ENCODE measurements at regions of chr1 and their contacts with region 1.

Region 1: GRCh38 chr1:47189844-47190508 is at the start of gene PDZK1IP1:
- DNase-seq: peak; percentile 86 to 92 (median 90)
- ATAC-seq: peak; percentile 81 to 89 (median 85)
- H3K4me3 ChIP-seq: peak within 1 kb of the TSS; percentile 3 to 43 (median 20)
- H3K27ac ChIP-seq: peak within 1 kb of the TSS; percentile 70 to 90 (median 79)
- H3K4me1 ChIP-seq: peaks cover 12 to 19% (median 17%) of the 10 kb centered on the region in 3 donors
- H3K27me3 ChIP-seq: no peaks in the 10 kb centered on the region
- CTCF ChIP-seq: no peak
- total RNA-seq, gene PDZK1IP1: 26.6 to 55.9 (median 46.4) TPM

Region 2: GRCh38 chr1:47231301-47232186 is 41.6 kb after region 1 on chr1:
- intact Hi-C with region 1: no loop called
- DNase-seq: peak in 1 of 6 donors; percentile 30
- ATAC-seq: peak in 3 of 4 donors; percentile 35 to 54 (median 42)
- H3K4me3 ChIP-seq: peak overlapping the region in 2 of 4 donors; percentile 8 to 22
- H3K27ac ChIP-seq: no peak overlapping the region
- H3K4me1 ChIP-seq: peaks cover 0 to 5% (median 0%) of the 10 kb centered on the region in 3 donors
- H3K27me3 ChIP-seq: peaks cover 0 to 42% (median 3%) of the 10 kb centered on the region in 4 donors
- CTCF ChIP-seq: no peak

Region 3: DNA sequence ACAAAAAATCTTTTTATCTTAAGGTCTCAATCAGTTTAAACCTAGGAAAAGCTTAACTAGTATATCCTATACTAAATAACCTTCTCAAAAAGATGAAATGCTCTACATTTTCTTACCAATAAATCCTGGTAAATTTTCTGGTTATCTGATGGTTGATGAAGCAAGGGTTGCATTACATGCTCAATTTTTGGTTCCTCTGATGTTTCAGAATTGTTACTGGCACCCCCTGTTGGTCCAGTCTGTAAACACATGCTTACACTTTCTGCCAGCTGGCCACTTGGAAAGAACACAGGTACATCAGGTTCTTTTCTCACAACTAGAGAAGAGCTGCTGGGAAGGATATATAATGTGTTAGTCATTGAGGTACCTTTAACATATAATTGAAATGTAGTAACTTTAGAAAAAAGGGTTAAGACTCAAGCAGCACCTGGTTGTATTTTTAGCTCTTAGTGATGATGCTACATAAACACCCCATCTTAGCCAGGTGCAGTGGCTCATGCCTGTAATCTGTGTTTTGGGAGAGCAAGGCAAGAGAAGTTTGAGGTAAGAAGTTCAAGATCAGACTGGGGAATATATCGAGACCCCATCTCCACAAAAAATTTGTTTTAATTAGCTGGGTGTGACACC is 72.9 kb after region 1 on chr1:
- intact Hi-C with region 1: loop called in 1 of 3 experiments (anchors 10 kb)
- DNase-seq: peak in 3 of 6 donors; percentile 22 to 63 (median 26)
- ATAC-seq: peak; percentile 60 to 85 (median 73)
- H3K4me3 ChIP-seq: no peak overlapping the region
- H3K27ac ChIP-seq: no peak overlapping the region
- H3K4me1 ChIP-seq: no peaks in the 10 kb centered on the region
- H3K27me3 ChIP-seq: no peaks in the 10 kb centered on the region
- CTCF ChIP-seq: peak in 3 of 4 donors; percentile 26 to 52 (median 51)

Region 4: GRCh38 chr1:47409311-47410070 is 219.5 kb after region 1 on chr1:
- intact Hi-C with region 1: loop called in 1 of 3 experiments (anchors 10 kb)
- DNase-seq: no peak
- ATAC-seq: peak in 1 of 4 donors; percentile 27
- H3K4me3 ChIP-seq: no peak overlapping the region
- H3K27ac ChIP-seq: no peak overlapping the region
- H3K4me1 ChIP-seq: no peaks in the 10 kb centered on the region
- H3K27me3 ChIP-seq: peaks cover 0 to 4% (median 0%) of the 10 kb centered on the region in 4 donors
- CTCF ChIP-seq: no peak

Region 5: DNA sequence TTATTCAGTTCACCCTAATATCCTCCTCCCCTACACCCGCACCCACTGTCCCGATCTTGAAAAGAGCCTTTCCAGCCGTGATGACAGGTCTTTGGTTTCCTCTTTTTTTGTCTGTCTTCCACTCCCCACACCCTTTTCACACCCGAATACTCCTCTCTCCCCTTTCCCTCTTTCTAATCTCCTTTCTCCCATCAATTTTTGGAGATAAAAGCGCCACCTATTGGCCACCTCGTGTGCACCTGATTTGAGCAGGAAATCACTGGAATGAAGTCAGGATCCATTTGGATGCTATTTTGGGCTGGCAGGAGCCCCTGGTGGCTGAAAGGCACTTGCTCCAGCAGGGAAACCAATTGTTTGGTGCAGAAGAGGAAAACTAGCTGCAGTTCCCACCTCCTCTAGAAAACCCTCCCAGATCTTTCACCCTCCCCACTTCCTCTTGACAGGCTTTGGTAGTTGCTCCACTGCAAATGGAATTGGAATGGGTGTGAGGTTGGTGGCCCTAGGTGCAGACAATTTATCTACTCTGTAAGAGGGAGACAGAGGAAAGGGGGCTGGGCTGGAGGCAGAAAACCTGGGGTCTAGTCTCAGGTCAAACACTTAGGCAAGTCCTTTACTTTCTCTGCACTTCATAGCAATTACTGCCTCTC is 234.5 kb after region 1 on chr1:
- intact Hi-C with region 1: loop called in 2 of 3 experiments (anchors 10 kb)
- DNase-seq: peak in 1 of 6 donors; percentile 39
- ATAC-seq: peak; percentile 28 to 70 (median 54)
- H3K4me3 ChIP-seq: no peak overlapping the region
- H3K27ac ChIP-seq: no peak overlapping the region
- H3K4me1 ChIP-seq: no peaks in the 10 kb centered on the region
- H3K27me3 ChIP-seq: no peaks in the 10 kb centered on the region
- CTCF ChIP-seq: peak; percentile 23 to 48 (median 42)

Region 6: GRCh38 chr1:47725992-47726855 is 536.2 kb after region 1 on chr1:
- intact Hi-C with region 1: loop called in 1 of 3 experiments (anchors 10 kb)
- DNase-seq: peak; percentile 56 to 86 (median 77)
- ATAC-seq: peak; percentile 88 to 96 (median 94)
- H3K4me3 ChIP-seq: no peak overlapping the region
- H3K27ac ChIP-seq: no peak overlapping the region
- H3K4me1 ChIP-seq: peaks cover 0 to 7% (median 4%) of the 10 kb centered on the region in 3 donors
- H3K27me3 ChIP-seq: peaks cover 0 to 3% (median 0%) of the 10 kb centered on the region in 4 donors
- CTCF ChIP-seq: peak; percentile 77 to 91 (median 83)

Measured in pancreas (tissue), 10 donors.